Mammary epithelial cell (primary cell): ENCODE measurements at regions of chr11 and their contacts with region 1.

Region 1: DNA sequence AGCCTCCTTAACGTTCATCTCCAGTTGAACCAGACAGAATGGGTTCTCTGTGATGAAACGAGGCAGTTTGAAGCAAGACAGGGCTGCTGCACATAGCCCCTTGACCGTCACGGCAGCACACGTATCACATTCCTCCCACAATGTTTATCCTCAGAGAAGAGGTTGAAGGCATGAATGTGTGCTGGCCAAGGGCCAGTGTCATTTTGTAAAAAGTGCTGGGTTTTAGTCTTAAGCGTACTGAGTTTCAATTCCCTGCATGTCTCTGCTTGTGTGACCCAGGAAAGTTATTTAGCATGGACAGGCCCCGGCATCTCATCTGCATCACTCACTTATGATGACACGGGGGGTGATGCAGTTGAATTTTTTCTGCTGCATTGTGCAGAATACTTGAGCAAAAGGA is 31.6 kb downstream of the TTC12 start:
- DNase-seq: peak; percentile 96
- H3K4me3 ChIP-seq: no peak overlapping the region
- H3K27ac ChIP-seq: peak overlapping the region; percentile 85
- H3K4me1 ChIP-seq: peaks cover 31% of the 10 kb centered on the region
- H3K27me3 ChIP-seq: no peaks in the 10 kb centered on the region
- CTCF ChIP-seq: no peak

Region 2: DNA sequence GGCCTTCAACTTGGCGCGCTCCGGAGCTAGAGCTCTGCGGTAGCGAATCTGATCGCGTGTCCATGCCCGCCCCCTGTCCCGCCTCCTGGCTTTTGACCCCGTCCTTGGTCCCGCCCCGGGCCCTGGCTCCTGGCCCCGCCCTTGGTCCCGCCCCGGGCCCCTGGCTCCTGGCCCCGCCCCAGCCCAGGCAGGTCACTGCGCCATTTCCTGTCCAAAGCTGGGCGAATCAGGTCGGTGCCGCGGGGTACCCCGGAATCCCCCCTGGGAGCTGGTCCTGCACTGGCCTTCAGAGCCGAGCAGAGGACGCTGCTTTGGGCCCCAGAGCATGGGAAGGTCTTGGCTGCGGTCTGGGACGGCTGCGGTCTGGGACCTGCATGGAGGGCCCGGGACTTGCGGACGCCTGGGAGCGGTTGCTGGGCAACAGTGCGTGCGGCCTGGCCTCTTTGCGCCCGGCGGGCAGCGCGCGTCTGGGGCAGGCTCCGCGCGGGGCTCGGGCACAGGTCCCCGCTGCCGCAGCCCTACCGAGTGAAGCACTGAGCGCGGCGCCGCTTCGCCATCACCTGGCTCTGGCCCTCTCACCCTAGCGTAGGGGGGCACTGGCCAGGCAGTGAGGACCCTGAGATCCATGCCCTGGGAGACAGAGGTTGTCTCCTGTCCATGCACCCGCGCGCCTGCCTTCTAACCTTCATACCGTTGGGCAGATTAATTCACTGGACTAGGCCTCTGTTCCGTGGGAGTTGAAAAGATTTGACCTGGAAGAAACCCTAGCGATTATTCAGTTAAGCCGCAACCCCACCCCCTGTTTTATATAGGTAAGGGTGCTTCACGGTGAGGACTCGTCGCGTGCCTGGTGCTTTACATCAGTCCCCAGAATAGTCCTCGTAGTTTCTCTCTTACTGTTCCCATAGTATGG is 31.3 kb before region 1 on chr11 and contains the start of gene TTC12:
- CTCF ChIA-PET with region 1: no interaction called
- dilution Hi-C with region 1: no loop called
- in situ Hi-C with region 1: no loop called
- intact Hi-C with region 1: loop called (anchors 1 kb)
- DNase-seq: peak; percentile 94
- H3K4me3 ChIP-seq: peak within 1 kb of the TSS; percentile 68 to 95 (median 89)
- H3K27ac ChIP-seq: peak within 1 kb of the TSS; percentile 95
- H3K4me1 ChIP-seq: peaks cover 35% of the 10 kb centered on the region
- H3K27me3 ChIP-seq: no peaks in the 10 kb centered on the region
- CTCF ChIP-seq: no peak
- total RNA-seq, gene TTC12: 32.5 to 36.5 TPM

Region 3: DNA sequence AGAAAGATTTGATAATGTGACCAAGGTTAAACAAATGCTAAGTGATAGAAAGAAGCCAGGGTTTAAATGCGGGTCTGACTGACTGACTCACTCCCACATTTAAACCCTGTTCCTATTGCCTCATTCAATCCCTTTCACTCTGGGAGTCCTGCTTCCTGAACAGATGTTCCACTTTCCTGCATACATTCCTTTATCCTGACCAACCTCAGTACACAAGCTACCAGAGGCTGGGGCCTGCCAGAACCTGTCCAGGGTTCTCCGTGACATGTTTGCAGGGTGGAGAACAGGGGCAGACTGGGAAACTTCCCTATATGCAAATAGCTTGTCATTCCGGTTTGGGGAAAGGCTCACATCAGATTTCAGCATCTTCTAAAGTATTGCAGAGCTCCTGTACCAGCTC is 38.6 kb after region 1 on chr11:
- CTCF ChIA-PET with region 1: interaction called, 5 read pairs
- dilution Hi-C with region 1: loop called (anchors 5 kb)
- in situ Hi-C with region 1: no loop called
- intact Hi-C with region 1: loop called (anchors 1 kb)
- DNase-seq: peak; percentile 100
- H3K4me3 ChIP-seq: no peak overlapping the region
- H3K27ac ChIP-seq: peak overlapping the region; percentile 85
- H3K4me1 ChIP-seq: peaks cover 41% of the 10 kb centered on the region
- H3K27me3 ChIP-seq: no peaks in the 10 kb centered on the region
- CTCF ChIP-seq: no peak

Region 4: DNA sequence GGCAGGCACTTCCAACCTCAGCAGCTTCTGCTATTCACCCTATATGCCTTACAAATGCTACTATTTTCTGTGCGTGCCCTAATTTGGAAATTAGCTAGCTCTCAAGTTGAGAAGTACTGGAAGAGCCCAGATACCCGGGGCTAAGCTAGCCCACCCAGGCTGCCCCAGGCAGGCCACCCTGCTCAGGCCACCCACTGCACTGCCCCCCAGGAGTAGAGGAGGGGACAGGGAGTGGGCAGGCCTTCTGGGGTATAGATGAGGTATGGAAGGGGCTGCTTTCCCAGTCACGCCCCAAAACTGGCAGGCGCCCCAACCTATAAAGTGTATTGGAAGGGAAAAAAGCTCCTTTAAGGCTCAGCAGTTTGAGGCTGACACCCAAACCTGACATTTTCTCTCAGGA is 85.8 kb after region 1 on chr11:
- CTCF ChIA-PET with region 1: no interaction called
- dilution Hi-C with region 1: loop called (anchors 5 kb)
- in situ Hi-C with region 1: no loop called
- intact Hi-C with region 1: no loop called
- DNase-seq: no peak
- H3K4me3 ChIP-seq: no peak overlapping the region
- H3K27ac ChIP-seq: no peak overlapping the region
- H3K4me1 ChIP-seq: peaks cover 18% of the 10 kb centered on the region
- H3K27me3 ChIP-seq: no peaks in the 10 kb centered on the region
- CTCF ChIP-seq: no peak

Region 5: GRCh38 chr11:113474362-113475159 is 128.6 kb after region 1 on chr11:
- CTCF ChIA-PET with region 1: interaction called, 6 read pairs
- dilution Hi-C with region 1: no loop called
- in situ Hi-C with region 1: no loop called
- intact Hi-C with region 1: loop called (anchors 10 kb)
- DNase-seq: peak; percentile 84
- H3K4me3 ChIP-seq: peak overlapping the region; percentile 49 to 59 (median 50)
- H3K27ac ChIP-seq: peak overlapping the region; percentile 16
- H3K4me1 ChIP-seq: peaks cover 14% of the 10 kb centered on the region
- H3K27me3 ChIP-seq: no peaks in the 10 kb centered on the region
- CTCF ChIP-seq: no peak